Activated CD4-positive, alpha-beta T cell treated with anti-CD3 and anti-CD28 coated beads for 36 hours (primary cell): ENCODE measurements at regions of chr1 and their contacts with region 1.

Region 1: DNA sequence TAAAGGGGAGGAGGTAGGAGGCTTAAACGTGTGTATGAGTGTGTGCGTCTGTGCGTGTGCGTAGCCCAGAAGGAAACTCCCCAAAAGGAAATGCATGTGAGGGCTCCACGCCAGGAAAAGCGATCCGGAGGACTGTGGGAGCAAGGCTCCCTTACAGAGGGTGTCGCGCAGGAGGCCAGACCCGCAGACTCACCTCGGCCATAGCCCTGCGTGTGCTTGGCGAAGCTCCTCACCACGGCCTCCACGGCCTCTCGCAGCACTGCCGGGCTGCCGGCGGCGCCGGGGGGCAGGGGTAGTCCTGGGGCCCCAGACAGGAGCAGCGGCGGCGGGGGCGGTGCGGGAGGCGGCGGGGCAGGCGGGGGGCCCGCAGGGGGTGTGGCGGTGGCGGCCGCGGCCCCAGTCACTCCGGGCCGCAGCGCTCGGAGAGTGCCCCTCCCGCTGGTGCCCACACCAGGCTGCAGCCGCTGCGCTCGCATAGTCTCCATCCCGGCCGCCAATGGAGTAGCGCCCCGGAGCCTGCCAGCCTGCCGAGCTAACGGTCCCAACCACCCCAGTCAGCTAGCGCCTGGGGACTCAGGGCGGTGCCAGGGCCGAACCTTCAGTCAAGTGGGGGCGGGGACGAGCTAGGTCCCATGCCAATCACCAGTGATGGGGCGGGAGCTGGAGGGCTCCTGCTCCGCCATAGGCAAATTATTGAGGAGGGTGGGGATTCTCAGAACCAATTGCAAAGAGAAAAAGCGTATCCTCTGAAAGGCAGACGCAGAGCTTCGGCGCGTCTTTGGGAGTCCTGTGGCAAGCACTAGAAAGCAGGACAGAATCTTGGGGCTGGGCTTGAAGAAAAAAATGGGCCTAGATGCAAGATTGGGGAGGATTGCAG is at the start of gene LIX1L:
- DNase-seq: peak; percentile 98
- ATAC-seq: peak; percentile 89
- H3K4me3 Mint-ChIP-seq: peak within 1 kb of the TSS; percentile 87
- H3K27ac Mint-ChIP-seq: peak within 1 kb of the TSS; percentile 93
- H3K4me1 Mint-ChIP-seq: peaks cover 59% of the 10 kb centered on the region
- H3K27me3 Mint-ChIP-seq: no peaks in the 10 kb centered on the region
- total RNA-seq, gene LIX1L: 44.9 to 49.4 TPM

Region 2: GRCh38 chr1:145885738-145886287 is 71.9 kb before region 1 on chr1 and contains the start of gene ANKRD35:
- CTCF ChIA-PET with region 1: no interaction called
- POLR2A ChIA-PET with region 1: interaction called, 4 read pairs
- intact Hi-C with region 1: loop called in 1 of 2 experiments (anchors 1 kb)
- DNase-seq: peak; percentile 92
- ATAC-seq: peak; percentile 100
- H3K4me3 Mint-ChIP-seq: peak within 1 kb of the TSS; percentile 72
- H3K27ac Mint-ChIP-seq: no peak within 1 kb of the TSS
- H3K4me1 Mint-ChIP-seq: peaks cover 14% of the 10 kb centered on the region
- H3K27me3 Mint-ChIP-seq: peaks cover 17% of the 10 kb centered on the region
- total RNA-seq, gene ANKRD35: 0.30 to 0.55 TPM

Region 3: GRCh38 chr1:145918144-145918992 is 39.3 kb before region 1 on chr1 and contains the start of gene PEX11B:
- CTCF ChIA-PET with region 1: no interaction called
- POLR2A ChIA-PET with region 1: interaction called, 3 read pairs
- intact Hi-C with region 1: loop called (anchors 1 kb)
- DNase-seq: peak; percentile 94
- ATAC-seq: peak; percentile 89
- H3K4me3 Mint-ChIP-seq: peak within 1 kb of the TSS; percentile 93
- H3K27ac Mint-ChIP-seq: peak within 1 kb of the TSS; percentile 94
- H3K4me1 Mint-ChIP-seq: peaks cover 46% of the 10 kb centered on the region
- H3K27me3 Mint-ChIP-seq: no peaks in the 10 kb centered on the region
- total RNA-seq, gene PEX11B: 22.6 to 26.4 TPM

Region 4: DNA sequence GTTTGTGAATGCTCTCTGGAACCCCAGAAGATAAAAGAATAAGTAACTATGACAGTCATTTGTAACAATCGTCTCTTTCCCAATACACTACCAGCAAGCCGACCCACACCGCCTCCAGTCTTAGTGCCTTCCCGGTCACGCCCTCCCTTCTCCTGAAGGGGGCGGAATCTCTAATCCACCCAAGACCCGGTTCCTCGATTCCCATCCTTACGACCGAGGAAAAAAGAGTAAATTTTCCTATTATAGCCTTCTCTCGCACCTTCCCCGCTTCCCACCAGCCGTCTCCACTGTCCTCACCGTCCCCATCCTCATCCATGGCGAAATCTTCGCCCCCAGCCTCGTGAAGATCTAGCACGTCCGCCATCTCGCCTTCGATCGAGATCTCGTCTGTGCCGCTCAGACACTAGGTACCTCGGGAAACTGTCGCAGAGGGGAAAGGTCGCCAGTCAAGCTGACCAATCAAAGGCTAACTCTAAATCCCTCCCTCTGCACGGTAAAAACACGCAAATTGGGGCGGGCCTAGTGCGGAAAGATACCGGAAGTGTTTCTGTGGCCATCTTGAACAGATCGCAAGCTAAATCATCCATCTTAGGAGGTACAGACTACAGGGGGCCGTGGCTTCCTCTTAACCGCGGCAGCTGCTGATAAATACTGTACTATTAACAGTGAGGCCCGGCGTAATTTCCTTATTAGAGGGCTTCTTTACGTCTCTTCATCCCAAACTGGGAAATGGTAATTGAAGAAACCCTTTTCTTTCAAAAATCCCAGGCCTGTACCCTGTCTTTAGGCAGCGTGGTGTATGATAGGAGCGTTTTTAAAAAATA is 30.4 kb before region 1 on chr1 and contains the start of gene RBM8A:
- CTCF ChIA-PET with region 1: interaction called, 17 read pairs
- POLR2A ChIA-PET with region 1: interaction called, 43 read pairs
- intact Hi-C with region 1: loop called (anchors 1 kb)
- DNase-seq: peak; percentile 96
- ATAC-seq: peak; percentile 97
- H3K4me3 Mint-ChIP-seq: no peak within 1 kb of the TSS
- H3K27ac Mint-ChIP-seq: no peak within 1 kb of the TSS
- H3K4me1 Mint-ChIP-seq: peaks cover 28% of the 10 kb centered on the region
- H3K27me3 Mint-ChIP-seq: no peaks in the 10 kb centered on the region
- total RNA-seq, gene RBM8A: 293 to 330 TPM

Region 5: DNA sequence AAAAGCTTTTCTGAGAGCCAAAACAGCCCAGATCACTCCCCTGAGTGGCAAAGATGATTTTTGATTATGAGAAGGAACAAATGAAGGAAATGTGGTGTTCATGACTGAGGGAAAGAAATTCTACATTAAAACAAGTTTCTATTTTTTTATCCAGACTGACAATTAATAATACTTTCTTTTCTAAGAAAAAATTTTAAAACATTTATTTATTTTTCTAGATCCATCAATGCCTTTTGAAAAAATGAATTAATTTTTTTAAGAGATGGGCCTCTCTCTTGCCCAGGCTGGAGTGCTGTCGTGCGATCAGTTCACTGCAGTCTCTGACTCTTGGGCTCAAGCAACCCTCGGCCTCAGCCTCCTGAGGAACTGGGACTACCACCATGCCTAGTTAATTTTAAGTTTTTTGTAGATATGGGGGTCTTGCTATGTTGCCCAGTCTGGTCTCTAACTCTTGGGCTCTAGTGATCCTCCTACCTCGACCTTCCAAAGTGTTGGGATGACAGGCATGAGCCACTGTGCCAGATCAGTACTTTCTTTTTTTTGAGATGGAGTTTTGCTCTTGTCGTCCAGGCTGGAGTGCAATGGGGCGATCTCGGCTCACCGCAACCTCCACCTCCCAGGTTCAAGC is 49.9 kb after region 1 on chr1:
- CTCF ChIA-PET with region 1: interaction called, 10 read pairs
- POLR2A ChIA-PET with region 1: no interaction called
- intact Hi-C with region 1: no loop called
- DNase-seq: no peak
- ATAC-seq: no peak
- H3K4me3 Mint-ChIP-seq: peak overlapping the region; percentile 58
- H3K27ac Mint-ChIP-seq: peak overlapping the region; percentile 76
- H3K4me1 Mint-ChIP-seq: peaks cover 38% of the 10 kb centered on the region
- H3K27me3 Mint-ChIP-seq: no peaks in the 10 kb centered on the region

Region 6: GRCh38 chr1:146036965-146037646 is 79.4 kb after region 1 on chr1:
- CTCF ChIA-PET with region 1: interaction called, 3 read pairs
- POLR2A ChIA-PET with region 1: interaction called, 3 read pairs
- intact Hi-C with region 1: loop called (anchors 1 kb)
- DNase-seq: peak; percentile 91
- ATAC-seq: peak; percentile 45
- H3K4me3 Mint-ChIP-seq: peak overlapping the region; percentile 95
- H3K27ac Mint-ChIP-seq: peak overlapping the region; percentile 98
- H3K4me1 Mint-ChIP-seq: peaks cover 36% of the 10 kb centered on the region
- H3K27me3 Mint-ChIP-seq: peaks cover 2% of the 10 kb centered on the region

Region 7: DNA sequence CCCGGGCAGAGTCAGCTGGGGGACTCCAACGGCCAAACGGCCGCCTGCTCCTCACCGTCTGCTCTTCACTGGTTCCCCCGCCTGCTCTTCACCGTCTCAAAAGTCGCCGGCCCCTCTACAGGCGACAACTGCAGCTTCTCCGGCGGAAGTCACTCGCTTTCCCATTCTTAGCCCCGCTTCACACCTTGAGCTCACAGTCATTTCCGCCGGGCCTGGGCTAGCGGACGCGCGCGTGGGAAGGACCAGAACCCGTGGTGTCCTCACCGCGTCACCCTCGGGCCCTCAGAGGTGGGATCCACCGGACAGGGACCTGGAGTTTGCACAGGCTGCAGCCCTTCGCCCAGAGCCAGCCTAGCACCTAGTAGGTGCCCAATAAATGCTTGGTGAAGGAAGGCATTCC is 91.8 kb after region 1 on chr1:
- CTCF ChIA-PET with region 1: no interaction called
- POLR2A ChIA-PET with region 1: interaction called, 38 read pairs
- intact Hi-C with region 1: loop called in 1 of 2 experiments (anchors 5 kb)
- DNase-seq: no peak
- ATAC-seq: no peak
- H3K4me3 Mint-ChIP-seq: no peak overlapping the region
- H3K27ac Mint-ChIP-seq: no peak overlapping the region
- H3K4me1 Mint-ChIP-seq: peaks cover 26% of the 10 kb centered on the region
- H3K27me3 Mint-ChIP-seq: no peaks in the 10 kb centered on the region